Activated CD4-positive, alpha-beta T cell treated with anti-CD3 and anti-CD28 coated beads for 36 hours (primary cell): ENCODE measurements at regions of chr2 and their contacts with region 1.

Region 1: GRCh38 chr2:136255648-136256463 is 137.9 kb upstream of the CXCR4 start:
- DNase-seq: peak; percentile 60
- ATAC-seq: peak; percentile 87
- H3K4me3 Mint-ChIP-seq: no peak overlapping the region
- H3K27ac Mint-ChIP-seq: peak overlapping the region; percentile 55
- H3K4me1 Mint-ChIP-seq: peaks cover 20% of the 10 kb centered on the region
- H3K27me3 Mint-ChIP-seq: no peaks in the 10 kb centered on the region

Region 2: GRCh38 chr2:136281281-136282114 is 25.6 kb after region 1 on chr2:
- CTCF ChIA-PET with region 1: interaction called, 6 read pairs
- POLR2A ChIA-PET with region 1: no interaction called
- intact Hi-C with region 1: loop called in 1 of 2 experiments (anchors 2 kb)
- DNase-seq: peak; percentile 45
- ATAC-seq: peak; percentile 72
- H3K4me3 Mint-ChIP-seq: no peak overlapping the region
- H3K27ac Mint-ChIP-seq: peak overlapping the region; percentile 67
- H3K4me1 Mint-ChIP-seq: peaks cover 39% of the 10 kb centered on the region
- H3K27me3 Mint-ChIP-seq: no peaks in the 10 kb centered on the region

Region 3: DNA sequence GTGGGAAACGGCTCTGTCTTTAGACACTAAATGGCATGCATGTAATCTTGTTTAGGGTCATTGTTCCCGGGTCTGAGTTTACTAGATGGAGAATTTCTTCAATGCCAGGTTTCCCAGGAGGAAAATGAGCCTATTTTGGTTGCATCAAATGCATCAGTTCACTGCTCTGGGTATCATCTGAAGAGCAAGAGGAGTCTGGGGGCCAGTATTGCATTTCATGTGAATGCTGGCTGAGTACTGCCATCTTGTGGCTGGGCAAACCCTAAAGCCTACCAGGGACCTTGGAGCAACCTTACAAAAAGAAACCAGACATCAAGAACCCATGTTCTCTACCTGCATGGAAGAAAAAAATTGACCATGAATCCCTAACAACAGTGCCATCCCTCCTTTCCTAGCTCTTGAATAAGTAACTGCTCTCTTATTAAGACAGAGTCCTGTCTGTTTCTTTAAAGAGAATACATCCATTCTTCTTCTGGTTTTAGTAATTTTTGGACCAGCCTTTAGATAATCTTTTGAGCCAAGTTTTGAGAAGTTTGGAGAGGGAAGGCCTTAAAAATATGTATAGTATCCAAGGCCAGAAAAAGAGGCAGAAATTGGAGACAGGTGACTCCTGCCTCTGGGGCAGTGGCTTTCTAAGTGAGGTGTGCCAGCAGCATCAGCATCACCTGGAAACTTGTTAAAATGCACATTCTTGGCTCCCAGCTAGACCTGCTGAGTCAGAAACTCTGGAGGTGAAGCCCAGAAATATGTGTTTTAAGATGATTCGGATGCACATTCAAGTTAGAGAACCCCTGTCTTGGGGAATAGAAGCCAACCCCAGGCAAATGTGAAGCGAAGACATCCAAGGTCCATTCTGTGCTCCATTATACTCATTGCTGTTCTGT is 123.1 kb after region 1 on chr2:
- CTCF ChIA-PET with region 1: interaction called, 3 read pairs
- POLR2A ChIA-PET with region 1: no interaction called
- intact Hi-C with region 1: loop called in 1 of 2 experiments (anchors 5 kb)
- DNase-seq: peak; percentile 87
- ATAC-seq: peak; percentile 11
- H3K4me3 Mint-ChIP-seq: no peak overlapping the region
- H3K27ac Mint-ChIP-seq: no peak overlapping the region
- H3K4me1 Mint-ChIP-seq: peaks cover 82% of the 10 kb centered on the region
- H3K27me3 Mint-ChIP-seq: no peaks in the 10 kb centered on the region

Region 4: DNA sequence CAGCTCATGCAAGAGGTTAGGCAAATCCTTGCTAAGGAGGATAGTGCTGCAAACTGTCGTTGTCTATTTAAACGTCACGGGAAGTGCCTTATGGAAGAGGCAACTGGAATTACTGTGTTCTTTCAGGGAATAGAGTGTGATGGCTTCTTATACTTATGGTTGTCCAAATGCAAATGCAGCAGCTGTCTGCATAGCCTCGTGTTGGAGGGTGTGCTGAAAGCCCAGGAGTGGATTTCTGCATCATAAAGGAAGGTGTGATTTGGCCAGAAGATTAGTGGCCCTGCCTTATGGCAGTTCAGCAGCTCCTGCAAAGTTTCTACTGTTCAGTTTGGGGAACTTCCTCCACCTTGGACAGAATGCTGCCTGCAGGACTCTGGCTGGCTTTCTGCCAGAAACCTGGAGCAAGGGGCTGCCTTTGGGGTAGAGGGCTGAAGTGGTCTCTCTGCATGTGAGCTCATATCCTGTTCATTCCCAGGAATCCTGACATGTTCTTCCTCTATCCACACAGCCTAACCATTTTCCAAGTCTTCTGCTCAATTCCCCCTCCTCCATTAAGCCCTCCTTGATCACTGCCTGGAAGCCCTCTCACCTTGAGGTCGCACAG is 183.3 kb after region 1 on chr2:
- CTCF ChIA-PET with region 1: no interaction called
- POLR2A ChIA-PET with region 1: no interaction called
- intact Hi-C with region 1: no loop called
- DNase-seq: no peak
- ATAC-seq: no peak
- H3K4me3 Mint-ChIP-seq: no peak overlapping the region
- H3K27ac Mint-ChIP-seq: no peak overlapping the region
- H3K4me1 Mint-ChIP-seq: no peaks in the 10 kb centered on the region
- H3K27me3 Mint-ChIP-seq: peaks cover 9% of the 10 kb centered on the region

Region 5: DNA sequence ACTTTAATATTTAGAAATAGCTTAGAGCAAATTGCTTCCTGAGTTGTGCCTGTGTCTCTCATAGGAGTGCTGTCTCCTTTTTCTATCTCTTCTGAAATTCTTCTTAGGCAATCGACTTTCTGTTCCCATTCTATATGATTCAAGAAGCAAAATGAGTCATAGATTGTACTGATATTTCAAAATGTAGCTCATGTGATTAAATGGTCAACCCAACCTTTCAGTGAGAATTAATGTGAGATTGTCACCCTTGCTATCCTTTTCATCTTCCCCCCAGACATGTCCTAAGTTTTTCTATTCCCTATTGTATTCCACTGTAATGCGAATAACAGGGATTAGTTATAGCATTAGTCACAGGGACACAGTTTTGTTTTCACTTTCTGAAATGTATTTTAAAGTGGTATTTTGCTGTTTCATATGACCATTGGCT is 923.1 kb after region 1 on chr2:
- CTCF ChIA-PET with region 1: no interaction called
- POLR2A ChIA-PET with region 1: no interaction called
- intact Hi-C with region 1: no loop called
- DNase-seq: no peak
- ATAC-seq: no peak
- H3K4me3 Mint-ChIP-seq: no peak overlapping the region
- H3K27ac Mint-ChIP-seq: no peak overlapping the region
- H3K4me1 Mint-ChIP-seq: no peaks in the 10 kb centered on the region
- H3K27me3 Mint-ChIP-seq: peaks cover 2% of the 10 kb centered on the region